Activated CD4-positive, alpha-beta memory T cell treated with anti-CD3 and anti-CD28 coated beads for 36 hours (primary cell): ENCODE measurements at regions of chr22 and their contacts with region 1.

Region 1: DNA sequence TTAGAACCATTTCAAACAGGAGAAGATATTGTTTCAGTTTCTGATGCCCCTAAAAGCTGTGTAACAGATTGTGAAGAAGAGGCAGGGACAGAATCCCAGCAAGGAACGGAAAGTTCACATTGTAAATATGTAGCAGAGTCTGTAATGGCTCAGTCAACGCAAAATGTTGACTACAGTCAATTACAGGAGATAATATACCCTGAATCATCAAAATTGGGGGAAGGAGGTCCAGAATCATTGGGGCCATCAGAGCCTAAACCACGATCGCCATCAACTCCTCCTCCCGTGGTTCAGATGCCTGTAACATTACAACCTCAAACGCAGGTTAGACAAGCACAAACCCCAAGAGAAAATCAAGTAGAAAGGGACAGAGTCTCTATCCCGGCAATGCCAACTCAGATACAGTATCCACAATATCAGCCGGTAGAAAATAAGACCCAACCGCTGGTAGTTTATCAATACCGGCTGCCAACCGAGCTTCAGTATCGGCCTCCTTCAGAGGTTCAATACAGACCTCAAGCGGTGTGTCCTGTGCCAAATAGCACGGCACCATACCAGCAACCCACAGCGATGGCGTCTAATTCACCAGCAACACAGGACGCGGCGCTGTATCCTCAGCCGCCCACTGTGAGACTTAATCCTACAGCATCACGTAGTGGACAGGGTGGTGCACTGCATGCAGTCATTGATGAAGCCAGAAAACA is 40.8 kb downstream of the IGLL1 start:
- DNase-seq: peak; percentile 87
- H3K4me3 Mint-ChIP-seq: no peak overlapping the region
- H3K27ac Mint-ChIP-seq: no peak overlapping the region
- H3K4me1 Mint-ChIP-seq: peaks cover 9% of the 10 kb centered on the region
- H3K27me3 Mint-ChIP-seq: peaks cover 4% of the 10 kb centered on the region

Region 2: GRCh38 chr22:23315341-23315917 is 223.9 kb before region 1 on chr22:
- CTCF ChIA-PET with region 1: interaction called, 3 read pairs
- POLR2A ChIA-PET with region 1: no interaction called
- intact Hi-C with region 1: loop called (anchors 5 kb)
- DNase-seq: peak; percentile 70
- H3K4me3 Mint-ChIP-seq: no peak overlapping the region
- H3K27ac Mint-ChIP-seq: no peak overlapping the region
- H3K4me1 Mint-ChIP-seq: peaks cover 4% of the 10 kb centered on the region
- H3K27me3 Mint-ChIP-seq: no peaks in the 10 kb centered on the region

Region 3: DNA sequence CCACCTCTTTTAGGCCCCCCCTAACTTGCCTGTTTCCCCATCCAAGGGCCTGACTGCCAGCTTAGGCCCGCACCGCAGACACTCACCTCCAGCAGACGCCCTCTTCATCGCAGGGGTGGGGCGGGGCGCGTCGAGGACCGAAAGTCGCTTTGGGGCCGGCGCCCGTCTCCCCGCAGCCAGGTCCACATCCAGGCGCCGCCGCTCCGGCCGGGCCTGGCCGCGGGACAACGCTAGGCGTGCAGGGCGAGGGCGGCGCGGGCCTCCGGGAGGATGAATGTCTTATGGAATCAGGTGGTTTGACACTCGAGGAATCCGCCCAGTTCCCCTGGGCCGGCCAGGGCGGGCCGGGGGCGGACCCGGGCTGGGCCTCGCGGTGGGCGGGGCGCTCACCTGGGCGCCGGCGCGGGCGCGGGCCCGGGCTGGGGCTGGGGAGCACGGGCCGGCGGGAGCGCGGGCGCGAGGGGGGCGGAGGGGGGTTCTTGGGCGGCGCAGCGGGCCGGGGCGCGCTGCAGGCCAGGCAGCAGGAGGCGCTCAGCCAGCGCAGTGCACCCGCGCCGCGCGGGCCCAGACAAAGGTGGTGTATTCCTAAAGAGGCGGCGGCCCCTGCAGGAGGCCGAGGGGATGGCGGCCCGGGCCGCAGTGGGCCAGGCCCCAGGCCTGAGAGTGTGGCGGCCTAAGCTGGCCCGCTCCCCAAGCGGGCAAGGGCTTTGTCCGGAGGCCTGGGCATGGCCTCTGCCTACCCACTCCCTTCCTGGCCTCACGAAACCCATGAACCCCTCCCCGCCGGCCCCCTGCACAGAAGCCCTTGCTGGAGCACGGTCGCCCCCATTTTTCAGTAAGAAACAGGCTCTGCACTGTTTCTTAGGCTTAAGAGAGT is 136.8 kb before region 1 on chr22:
- CTCF ChIA-PET with region 1: no interaction called
- POLR2A ChIA-PET with region 1: no interaction called
- intact Hi-C with region 1: loop called (anchors 5 kb)
- DNase-seq: peak; percentile 67
- H3K4me3 Mint-ChIP-seq: no peak overlapping the region
- H3K27ac Mint-ChIP-seq: no peak overlapping the region
- H3K4me1 Mint-ChIP-seq: no peaks in the 10 kb centered on the region
- H3K27me3 Mint-ChIP-seq: peaks cover 2% of the 10 kb centered on the region

Region 4: GRCh38 chr22:23509571-23510305 is 29.5 kb before region 1 on chr22:
- CTCF ChIA-PET with region 1: no interaction called
- POLR2A ChIA-PET with region 1: no interaction called
- intact Hi-C with region 1: no loop called
- DNase-seq: no peak
- H3K4me3 Mint-ChIP-seq: no peak overlapping the region
- H3K27ac Mint-ChIP-seq: no peak overlapping the region
- H3K4me1 Mint-ChIP-seq: no peaks in the 10 kb centered on the region
- H3K27me3 Mint-ChIP-seq: no peaks in the 10 kb centered on the region

Region 5: DNA sequence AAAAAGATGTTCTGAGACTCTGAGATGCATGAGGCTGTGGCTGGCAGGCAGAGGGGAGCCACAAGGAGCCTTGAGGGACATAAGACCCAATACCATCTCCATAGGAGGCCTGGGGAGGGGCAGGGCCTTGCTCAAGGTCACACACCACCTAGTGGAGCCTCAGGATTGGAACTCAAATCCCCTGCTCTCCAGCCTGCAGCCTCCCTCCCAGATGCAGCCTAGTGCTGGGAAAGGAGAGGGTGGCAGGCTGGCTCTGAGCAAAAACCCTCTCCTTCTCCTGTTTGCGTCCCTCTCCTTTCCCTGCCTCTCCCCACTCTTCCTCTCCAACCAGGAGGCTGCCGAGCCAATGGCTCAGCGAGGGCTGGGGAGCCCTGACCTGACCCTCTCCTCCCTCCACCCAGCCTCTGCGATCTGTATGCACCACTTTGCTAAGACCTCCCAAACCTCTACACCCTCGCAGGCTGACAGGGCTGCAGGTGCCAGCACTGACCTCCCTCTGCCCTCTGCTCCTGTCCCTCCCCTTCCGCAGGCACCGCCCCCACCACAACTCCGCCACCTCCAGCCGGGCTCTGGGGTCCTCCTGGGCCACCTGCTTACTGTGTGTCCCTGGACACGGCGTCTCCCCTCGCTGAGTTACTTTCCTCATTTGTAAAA is 26.1 kb after region 1 on chr22:
- CTCF ChIA-PET with region 1: no interaction called
- POLR2A ChIA-PET with region 1: no interaction called
- intact Hi-C with region 1: no loop called
- DNase-seq: peak; percentile 14
- H3K4me3 Mint-ChIP-seq: peak overlapping the region; percentile 60
- H3K27ac Mint-ChIP-seq: no peak overlapping the region
- H3K4me1 Mint-ChIP-seq: peaks cover 9% of the 10 kb centered on the region
- H3K27me3 Mint-ChIP-seq: peaks cover 28% of the 10 kb centered on the region

Region 6: DNA sequence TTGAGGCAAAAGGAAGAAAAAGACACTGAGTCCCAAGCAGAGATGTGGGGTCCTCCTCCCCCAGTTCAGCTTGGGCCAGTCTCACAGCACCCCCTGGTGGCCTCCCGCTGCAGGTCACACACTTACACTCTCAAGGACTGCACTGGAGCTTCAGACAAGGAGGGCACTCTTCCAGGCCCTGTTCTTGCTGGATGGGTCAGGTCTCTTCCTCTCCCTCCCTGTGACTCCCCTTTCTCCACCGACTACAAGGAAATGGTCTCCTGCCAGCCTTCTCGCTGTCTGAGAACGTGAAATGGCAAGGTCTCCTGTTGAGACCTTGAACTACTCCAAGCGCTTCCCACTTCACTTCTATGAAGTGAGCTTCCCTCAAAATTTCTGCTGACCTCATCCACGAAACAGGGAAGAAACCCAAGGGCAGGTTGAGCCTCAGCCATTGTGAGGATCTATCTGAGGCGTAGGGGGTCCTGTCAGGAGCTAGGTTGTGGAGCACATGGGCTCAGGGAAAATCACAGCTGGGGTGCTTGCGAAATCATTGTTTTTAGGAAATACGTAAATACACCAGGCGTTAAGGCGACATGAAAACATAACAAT is 52.0 kb after region 1 on chr22:
- CTCF ChIA-PET with region 1: interaction called, 6 read pairs
- POLR2A ChIA-PET with region 1: no interaction called
- intact Hi-C with region 1: loop called (anchors 1 kb)
- DNase-seq: peak; percentile 62
- H3K4me3 Mint-ChIP-seq: no peak overlapping the region
- H3K27ac Mint-ChIP-seq: no peak overlapping the region
- H3K4me1 Mint-ChIP-seq: peaks cover 2% of the 10 kb centered on the region
- H3K27me3 Mint-ChIP-seq: no peaks in the 10 kb centered on the region

Region 7: GRCh38 chr22:23655891-23656475 is 116.7 kb after region 1 on chr22:
- CTCF ChIA-PET with region 1: no interaction called
- POLR2A ChIA-PET with region 1: no interaction called
- intact Hi-C with region 1: no loop called
- DNase-seq: no peak
- H3K4me3 Mint-ChIP-seq: no peak overlapping the region
- H3K27ac Mint-ChIP-seq: no peak overlapping the region
- H3K4me1 Mint-ChIP-seq: no peaks in the 10 kb centered on the region
- H3K27me3 Mint-ChIP-seq: no peaks in the 10 kb centered on the region

Region 8: DNA sequence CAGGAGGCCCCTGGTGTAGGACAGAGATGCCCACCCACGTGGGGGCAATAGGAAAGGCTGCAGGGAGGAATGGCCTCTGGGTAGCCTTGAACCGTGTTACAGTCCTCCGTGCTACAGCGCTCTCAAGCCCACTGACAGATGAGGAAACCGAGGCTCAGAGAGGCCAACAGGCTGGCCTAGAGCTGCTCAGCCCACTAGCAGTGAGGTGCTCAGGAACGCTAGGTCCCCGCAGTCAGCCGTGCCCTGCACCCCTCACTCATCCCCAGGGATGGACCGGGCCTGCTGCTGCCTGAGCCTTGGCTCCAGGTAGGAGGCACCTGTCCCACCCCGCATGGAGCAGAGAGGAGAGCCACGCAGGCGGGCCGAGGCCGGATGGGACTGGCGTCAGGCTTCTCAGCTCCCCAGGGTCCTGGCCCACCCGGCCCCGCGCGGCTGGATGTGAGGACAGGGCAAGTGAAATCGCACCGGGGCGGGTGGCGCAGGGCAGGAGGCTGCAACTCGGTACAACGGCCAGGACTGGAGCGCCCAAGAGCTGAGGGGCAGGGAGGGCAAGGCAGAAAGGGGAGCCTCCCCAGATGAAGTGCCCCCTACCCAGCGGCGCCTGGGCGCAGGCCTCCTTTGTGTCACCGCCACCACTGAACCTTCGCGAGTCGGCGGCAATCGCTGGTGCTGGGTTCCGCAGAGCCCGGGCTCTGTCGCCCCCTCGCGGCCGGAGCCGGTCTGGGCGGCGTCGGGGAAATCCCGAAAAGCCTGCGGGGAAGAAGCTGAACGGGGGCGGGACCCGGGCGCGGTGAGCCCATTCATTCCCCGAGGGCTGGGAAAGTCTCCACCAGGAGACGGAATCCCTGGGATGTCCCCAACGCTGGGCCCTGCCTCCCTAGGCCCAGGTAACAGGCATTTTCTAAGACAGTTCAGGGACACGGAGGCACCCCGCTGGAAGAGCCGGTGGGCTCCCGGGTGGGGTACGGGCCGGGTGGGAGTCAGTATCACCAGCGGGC is 310.0 kb after region 1 on chr22:
- CTCF ChIA-PET with region 1: interaction called, 5 read pairs
- POLR2A ChIA-PET with region 1: no interaction called
- intact Hi-C with region 1: loop called (anchors 5 kb)
- DNase-seq: peak; percentile 91
- H3K4me3 Mint-ChIP-seq: no peak overlapping the region
- H3K27ac Mint-ChIP-seq: no peak overlapping the region
- H3K4me1 Mint-ChIP-seq: peaks cover 7% of the 10 kb centered on the region
- H3K27me3 Mint-ChIP-seq: peaks cover 2% of the 10 kb centered on the region

Region 9: DNA sequence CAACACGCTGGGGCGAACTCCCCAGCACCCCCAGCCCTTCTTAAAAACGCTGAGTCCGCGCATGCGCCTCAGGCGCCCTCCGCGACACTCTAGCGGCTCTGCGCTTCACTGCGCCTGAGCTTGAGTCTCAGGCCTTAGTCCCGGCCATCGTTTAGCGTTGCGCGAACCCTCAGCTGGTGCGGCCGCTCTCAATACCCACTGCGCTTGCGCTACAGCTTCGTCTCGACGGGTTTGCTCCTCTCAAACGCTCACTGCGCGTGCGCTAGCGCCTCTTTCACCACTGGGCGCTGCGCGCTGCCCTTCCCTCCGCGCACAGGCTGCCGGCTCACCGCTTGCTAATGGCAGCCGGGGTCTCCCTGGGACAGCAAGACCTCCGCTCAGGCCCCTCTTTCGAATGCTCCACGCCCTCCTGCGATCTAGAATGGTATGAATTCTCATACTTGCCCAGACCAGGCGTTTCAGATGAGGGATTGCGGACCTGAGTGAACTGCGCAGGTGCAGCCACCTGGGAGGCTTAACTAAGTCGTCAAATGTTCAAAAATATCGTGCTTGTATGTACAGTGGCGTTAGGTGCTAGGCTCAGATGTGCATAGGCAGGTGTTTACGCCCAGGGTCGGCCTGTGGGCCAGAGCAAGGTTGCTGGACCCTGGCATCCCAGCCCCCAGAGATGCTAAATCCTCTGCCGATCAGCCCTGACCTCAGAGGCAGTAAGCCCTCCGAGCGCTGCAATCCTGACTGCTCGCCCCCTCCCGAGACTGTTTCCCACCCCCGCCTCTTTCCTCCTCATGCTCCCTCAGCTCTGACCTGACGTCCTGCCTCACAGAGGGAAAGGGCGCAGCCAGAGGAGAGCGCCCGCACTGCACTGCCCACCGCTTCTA is 318.6 kb after region 1 on chr22 and contains the start of gene SLC2A11:
- CTCF ChIA-PET with region 1: interaction called, 3 read pairs
- POLR2A ChIA-PET with region 1: no interaction called
- intact Hi-C with region 1: loop called (anchors 5 kb)
- DNase-seq: peak; percentile 96
- H3K4me3 Mint-ChIP-seq: peak within 1 kb of the TSS; percentile 89
- H3K27ac Mint-ChIP-seq: peak within 1 kb of the TSS; percentile 78
- H3K4me1 Mint-ChIP-seq: peaks cover 17% of the 10 kb centered on the region
- H3K27me3 Mint-ChIP-seq: no peaks in the 10 kb centered on the region
- total RNA-seq, gene SLC2A11: 6.8 to 8.9 TPM